ENCODE measurements at regions of chr19 and their contacts with region 1.

Region 1: GRCh38 chr19:43798546-43799409 is 3.5 kb downstream of the LYPD5 start:
- DNase-seq: no peak
- ATAC-seq: peak; percentile 59

Region 2: GRCh38 chr19:43489310-43489709 is 309.5 kb before region 1 on chr19:
- intact Hi-C with region 1: no loop called
- DNase-seq: no peak
- ATAC-seq: no peak

Region 3: GRCh38 chr19:43675269-43675879 is 123.4 kb before region 1 on chr19:
- intact Hi-C with region 1: loop called (anchors 10 kb)
- DNase-seq: no peak
- ATAC-seq: no peak

Region 4: DNA sequence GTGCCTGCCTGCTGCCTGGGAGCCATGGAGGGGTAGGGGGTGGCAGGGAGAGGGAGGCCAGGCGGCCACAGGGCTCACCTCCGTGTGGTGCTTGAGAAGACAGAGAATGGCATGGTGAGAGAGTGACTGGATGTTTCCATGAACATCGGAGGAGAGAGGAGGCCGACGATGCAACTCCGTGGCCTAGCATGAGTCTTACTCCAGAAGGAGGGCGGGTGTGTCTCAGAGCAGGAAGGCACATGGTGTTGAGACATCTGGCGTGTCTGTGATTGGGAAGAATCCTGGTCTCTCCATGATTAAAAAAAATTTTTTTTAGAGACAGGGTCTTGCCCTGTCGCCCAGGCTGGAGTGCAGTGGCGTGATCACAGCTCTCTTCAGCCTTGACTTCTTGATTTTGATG is 77.8 kb before region 1 on chr19:
- intact Hi-C with region 1: no loop called
- DNase-seq: no peak
- ATAC-seq: no peak

Region 5: GRCh38 chr19:43754503-43755255 is 44.1 kb before region 1 on chr19 and contains the start of gene SMG9:
- intact Hi-C with region 1: no loop called
- DNase-seq: peak; percentile 99
- ATAC-seq: peak; percentile 97
- total RNA-seq, gene SMG9: 15.7 TPM

Region 6: GRCh38 chr19:44010468-44010867 is 211.7 kb after region 1 on chr19:
- intact Hi-C with region 1: no loop called
- DNase-seq: no peak
- ATAC-seq: no peak